ENCODE measurements at regions of chr3 and their contacts with region 1.

Region 1: DNA sequence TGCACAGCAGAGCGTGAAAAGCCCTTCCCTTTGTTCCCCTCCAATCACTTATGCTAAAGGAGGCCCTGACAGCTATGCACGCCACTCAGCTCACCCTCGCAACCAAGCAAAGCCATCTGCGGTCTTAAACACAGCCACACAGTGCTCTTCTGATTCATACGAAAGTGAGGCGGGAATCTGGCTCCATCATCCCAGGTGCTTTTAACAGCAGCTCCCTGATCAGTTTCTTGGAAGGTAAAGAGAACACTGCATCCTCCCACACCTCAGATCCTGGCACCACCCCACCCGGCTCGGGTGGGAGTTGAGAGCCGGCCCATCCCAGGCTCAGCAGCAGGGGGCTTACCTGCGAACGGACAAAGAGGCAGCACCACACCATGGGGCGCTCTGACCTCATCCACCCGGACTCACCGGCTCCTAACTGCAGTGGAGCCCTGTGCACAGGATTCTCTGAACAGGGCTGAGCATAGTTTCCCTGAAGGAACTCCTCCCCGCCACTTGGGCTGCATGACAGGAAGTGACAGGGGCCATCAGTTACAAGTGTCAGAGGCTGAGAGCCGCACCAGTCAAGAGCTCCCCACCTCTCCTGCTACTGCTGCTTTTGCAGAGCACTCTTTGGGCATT is 114.3 kb upstream of the ARHGEF3 start:
- DNase-seq: no peak

Region 2: DNA sequence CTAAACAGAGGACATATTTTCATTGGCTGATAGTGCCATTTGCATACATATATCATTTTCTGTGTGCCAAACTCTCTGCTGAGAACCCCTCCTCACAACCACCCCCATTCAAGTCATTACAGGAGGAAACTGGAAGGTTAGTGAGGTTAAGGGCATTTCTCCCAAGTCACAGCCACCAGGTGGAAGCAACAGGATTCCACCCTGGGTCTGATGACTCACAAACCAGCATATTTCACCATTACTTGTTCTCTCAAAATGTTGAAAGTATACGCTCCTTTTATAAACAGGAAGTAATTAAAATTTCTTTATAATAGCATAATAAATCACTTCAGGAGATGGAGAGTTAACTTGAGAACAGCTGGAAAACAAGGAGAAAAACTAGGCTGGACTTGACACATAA is 1030.4 kb before region 1 on chr3:
- intact Hi-C with region 1: no loop called
- DNase-seq: no peak

Region 3: GRCh38 chr3:56855856-56856512 is 60.1 kb before region 1 on chr3:
- intact Hi-C with region 1: loop called (anchors 10 kb)
- DNase-seq: no peak

Region 4: GRCh38 chr3:56878074-56878473 is 38.0 kb before region 1 on chr3:
- intact Hi-C with region 1: no loop called
- DNase-seq: no peak